Posterior cingulate gyrus (tissue), 11 donors: ENCODE measurements at regions of chr5 and their contacts with region 1.

Region 1: DNA sequence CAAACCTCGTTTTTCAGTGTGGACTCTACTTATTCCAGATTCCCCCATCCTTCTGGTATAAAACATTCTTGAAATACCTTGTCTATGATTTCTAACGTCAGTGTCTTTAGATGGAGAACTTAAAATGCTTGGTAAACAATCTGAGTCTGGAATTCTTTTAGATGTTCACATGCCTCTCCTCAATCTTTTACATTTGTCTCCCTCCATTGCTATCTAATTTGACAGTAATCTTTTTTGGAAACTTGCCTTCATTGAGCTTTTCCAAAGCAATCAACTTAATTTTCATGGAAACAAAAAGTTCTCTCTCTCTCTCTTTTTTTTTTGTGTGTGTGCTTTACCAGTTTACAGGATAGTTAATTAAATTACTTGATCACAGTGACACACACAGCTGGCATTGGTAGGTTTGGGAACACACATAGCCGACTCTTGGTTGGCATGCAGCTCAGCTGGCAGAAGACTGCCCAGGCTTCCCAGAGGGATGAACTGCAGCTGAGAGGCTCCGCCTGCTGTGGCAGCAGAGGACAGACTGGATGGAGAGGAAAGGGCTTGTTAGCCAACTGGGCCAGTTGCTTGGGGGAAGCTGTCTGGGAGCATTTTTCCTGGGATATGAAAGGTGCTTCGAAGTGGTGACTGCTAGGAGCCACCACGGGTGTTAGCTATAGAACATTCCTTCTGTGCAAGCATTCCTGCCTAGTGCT is 271.3 kb downstream of the ZSWIM6 start:
- DNase-seq: peak; percentile 59 to 96 (median 74)

Region 2: DNA sequence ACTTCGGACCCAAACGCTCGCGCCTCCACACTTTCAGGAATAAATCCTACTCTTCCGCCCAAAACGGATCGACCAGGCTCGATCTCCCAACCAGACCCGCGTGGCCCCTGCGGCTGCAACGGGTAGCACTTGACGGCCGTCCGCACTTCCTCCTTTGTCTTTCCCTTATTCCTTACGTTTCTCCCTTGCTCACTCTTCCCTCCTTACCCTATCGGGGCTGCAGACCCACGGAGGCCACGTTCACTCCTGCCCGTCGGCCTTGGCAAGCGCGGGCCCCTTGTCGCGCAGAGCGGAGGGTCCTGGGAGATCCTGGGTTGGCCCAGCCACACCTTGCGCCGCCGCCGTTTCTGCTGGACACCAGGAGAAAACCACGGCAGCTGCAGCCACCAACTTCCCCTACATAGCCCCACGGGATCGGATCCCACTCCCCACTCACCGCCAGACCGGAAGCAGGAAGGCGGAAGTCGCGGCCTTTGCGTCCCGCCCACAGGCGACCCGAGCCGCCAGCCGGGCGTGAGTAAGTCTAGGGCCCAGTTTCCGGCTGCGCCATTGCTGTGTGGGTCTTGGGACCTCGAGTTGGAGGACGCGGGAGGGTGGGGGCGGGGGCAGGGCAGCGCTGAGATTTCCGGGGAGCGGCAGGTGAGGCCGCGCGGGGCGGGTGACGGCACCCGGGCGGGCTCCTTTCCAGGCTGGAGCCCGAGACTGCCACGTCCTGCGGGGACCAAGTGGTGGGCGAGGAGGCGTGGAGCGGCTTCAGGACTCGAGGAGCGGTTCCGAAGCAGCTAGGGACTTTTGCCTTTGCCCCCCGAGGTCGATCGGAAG is 441.1 kb before region 1 on chr5 and contains the start of gene SMIM15:
- intact Hi-C with region 1: loop called (anchors 10 kb)
- DNase-seq: peak; percentile 75 to 98 (median 84)

Region 3: GRCh38 chr5:61438298-61438970 is 164.9 kb before region 1 on chr5:
- intact Hi-C with region 1: loop called (anchors 5 kb)
- DNase-seq: no peak

Region 4: DNA sequence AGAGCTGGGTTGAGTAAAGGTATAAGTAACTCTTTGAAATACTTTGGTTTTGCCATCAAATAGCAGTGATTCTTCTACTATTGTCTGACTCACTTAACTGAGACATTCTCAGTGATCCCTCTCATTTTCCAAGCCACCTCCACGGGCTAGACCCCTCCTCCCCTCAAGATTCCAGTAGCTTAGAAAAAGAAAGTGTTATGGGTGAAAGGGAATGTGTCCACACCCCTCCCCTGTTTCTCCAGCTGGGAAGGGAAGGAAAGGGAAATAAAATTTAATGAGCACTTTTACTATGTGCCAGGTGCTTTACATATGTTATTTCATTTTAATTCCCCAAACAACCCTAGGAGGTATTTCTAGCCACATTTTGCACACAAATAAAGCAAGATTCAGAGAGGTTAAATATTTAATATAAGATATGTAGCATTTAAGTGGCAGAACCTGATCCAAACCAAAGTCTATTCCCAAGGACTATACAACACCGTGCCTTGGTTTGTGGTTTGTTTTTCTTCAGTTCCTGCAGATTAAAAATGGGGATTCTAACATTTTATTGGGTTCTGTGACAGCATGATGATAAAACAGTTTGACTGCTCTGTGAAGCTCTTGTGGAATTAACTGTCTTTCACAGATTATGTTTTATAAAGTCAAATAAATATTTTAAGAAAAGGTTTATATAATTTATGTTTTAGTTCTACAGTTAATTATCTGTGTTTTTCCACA is 135.4 kb before region 1 on chr5:
- intact Hi-C with region 1: no loop called
- DNase-seq: no peak

Region 5: DNA sequence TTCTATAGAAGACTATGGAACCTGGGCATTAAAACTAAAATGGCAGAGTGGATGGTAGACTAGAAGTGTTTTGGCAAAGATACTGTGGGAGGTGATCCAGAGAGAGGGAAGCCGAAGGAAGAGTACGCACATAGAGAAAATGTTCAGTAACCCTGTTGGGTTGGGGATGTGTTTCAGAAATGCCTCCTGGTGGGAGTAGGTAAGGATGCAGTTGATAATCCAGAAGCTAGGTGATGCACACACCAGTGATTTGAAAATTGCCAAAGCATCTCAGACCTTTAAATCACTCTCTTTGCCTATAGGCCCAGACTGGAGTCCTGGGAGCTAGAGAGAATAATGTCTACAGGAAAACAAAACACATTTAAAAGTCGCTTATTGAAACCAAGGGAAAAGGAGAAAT is 94.0 kb before region 1 on chr5:
- intact Hi-C with region 1: no loop called
- DNase-seq: no peak